ENCODE measurements at regions of chr1 and their contacts with region 1.

Region 1: GRCh38 chr1:78676347-78676982 is 26.8 kb downstream of the IFI44 start:
- DNase-seq: peak; percentile 76
- H3K4me3 Mint-ChIP-seq: no peak overlapping the region
- H3K27ac Mint-ChIP-seq: no peak overlapping the region
- H3K4me1 Mint-ChIP-seq: no peaks in the 10 kb centered on the region
- H3K27me3 Mint-ChIP-seq: no peaks in the 10 kb centered on the region
- CTCF ChIP-seq: peak; percentile 71

Region 2: DNA sequence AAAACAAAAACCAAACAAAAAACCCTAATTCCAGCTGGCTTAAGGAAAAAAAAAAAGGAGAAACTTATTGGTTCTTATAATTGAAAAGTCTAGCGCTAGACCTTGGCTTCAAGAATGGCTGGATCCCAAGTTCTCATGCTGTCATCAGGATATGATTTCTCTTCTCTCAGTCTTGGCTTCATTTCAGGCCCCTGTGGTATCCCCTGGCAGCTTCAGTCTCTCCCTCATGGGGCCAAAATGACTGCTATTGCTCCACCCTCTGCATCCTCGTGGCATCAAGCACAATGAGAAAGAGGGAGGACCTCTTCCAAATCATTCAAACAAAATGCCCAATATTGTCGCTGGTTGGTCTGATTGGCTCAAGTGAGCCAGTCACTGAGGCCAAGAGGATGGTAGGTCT is 550.0 kb before region 1 on chr1:
- CTCF ChIA-PET with region 1: interaction called, 21 read pairs
- POLR2A ChIA-PET with region 1: no interaction called
- intact Hi-C with region 1: loop called (anchors 1 kb)
- DNase-seq: no peak
- H3K4me3 Mint-ChIP-seq: no peak overlapping the region
- H3K27ac Mint-ChIP-seq: no peak overlapping the region
- H3K4me1 Mint-ChIP-seq: no peaks in the 10 kb centered on the region
- H3K27me3 Mint-ChIP-seq: no peaks in the 10 kb centered on the region
- CTCF ChIP-seq: no peak